ENCODE measurements at regions of chr4 and their contacts with region 1.

Region 1: DNA sequence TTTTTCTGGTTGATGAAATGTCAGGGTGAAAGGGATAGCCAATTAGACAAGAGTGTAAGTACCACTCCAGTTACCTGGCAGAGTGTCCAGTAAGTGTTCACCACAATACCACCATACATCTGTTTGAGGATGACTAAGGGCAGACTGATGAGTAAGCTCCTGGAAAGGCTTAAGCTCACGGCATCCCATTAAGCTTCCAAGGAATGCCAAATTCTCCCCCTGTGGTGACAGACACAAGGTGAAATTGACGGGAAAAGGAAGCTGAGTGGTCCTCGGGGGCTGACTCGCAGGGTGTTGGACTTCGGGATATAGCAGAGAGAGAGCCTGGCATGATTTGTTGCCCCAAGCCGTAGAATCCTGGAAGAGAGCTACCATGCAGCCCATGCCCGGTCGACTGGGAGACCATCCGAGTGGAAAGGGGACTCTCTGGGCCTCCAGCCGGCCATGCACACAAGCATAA is 7.6 kb upstream of the BST1 start:
- DNase-seq: peak; percentile 39 to 82
- ATAC-seq: peak; percentile 72 to 83
- H3K4me3 ChIP-seq: no peak overlapping the region
- H3K27ac ChIP-seq: peak overlapping the region; percentile 70 to 87
- H3K4me1 ChIP-seq: peaks cover 55% of the 10 kb centered on the region
- CTCF ChIP-seq: no peak
- EP300 ChIP-seq: peak in 1 of 2 experiments; percentile 63; a peak in 1 of 5 replicates
- POLR2A ChIP-seq: no peak
- RAD21 ChIP-seq: no peak

Region 2: DNA sequence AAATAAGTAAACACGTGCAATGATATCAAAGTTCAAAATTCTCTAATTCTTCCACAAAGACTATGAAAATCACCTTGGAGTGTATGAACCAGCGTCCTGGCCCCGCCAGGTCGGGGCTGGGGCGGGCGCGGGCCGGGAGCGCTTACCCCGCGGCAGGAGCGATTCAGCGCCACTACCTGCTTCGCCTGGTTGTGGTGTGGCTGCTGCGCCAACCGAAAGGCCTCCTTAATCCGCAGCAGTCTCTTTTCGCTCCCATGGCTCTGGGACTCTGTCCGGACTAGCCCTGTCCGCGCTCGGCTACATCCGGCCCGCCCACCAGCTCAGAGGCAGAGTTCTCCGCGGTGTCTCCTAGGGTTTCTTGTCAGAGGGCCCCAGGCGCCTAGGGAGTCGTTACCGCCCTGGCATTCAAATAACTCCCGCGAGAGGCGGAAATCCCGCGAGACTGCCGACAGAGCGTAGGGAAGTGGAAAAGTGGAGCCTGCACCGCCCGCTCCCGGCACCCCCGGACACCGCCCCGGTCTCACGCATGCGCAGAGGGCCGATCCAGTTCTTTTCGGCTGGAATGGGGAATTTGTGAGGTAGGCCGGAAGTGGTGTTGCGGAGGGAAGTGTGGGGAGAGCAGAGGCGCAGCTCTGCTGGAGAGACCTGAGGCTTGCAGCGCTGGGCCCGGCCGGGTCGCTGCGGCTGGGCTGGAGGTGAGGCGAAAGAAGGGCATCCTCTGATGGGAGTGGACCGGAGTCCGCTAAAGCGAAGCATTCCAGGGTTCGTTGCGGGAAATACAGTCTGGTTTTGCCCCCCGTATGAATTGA is 13.9 kb before region 1 on chr4 and contains the start of gene FAM200B:
- CTCF ChIA-PET with region 1: interaction called, 4 read pairs
- POLR2A ChIA-PET with region 1: interaction called, 15 read pairs
- DNase-seq: peak; percentile 89 to 98
- ATAC-seq: peak; percentile 93 to 95
- H3K4me3 ChIP-seq: peak within 1 kb of the TSS; percentile 69
- H3K27ac ChIP-seq: peak within 1 kb of the TSS; percentile 92 to 100
- H3K4me1 ChIP-seq: peaks cover 34% of the 10 kb centered on the region
- CTCF ChIP-seq: no peak
- EP300 ChIP-seq: no peak
- POLR2A ChIP-seq: peak; percentile 83
- RAD21 ChIP-seq: no peak
- polyA plus RNA-seq, gene FAM200B: 32.7 and 40.8 TPM in 2 replicates